ENCODE measurements at regions of chr14 and their contacts with region 1.

Region 1: DNA sequence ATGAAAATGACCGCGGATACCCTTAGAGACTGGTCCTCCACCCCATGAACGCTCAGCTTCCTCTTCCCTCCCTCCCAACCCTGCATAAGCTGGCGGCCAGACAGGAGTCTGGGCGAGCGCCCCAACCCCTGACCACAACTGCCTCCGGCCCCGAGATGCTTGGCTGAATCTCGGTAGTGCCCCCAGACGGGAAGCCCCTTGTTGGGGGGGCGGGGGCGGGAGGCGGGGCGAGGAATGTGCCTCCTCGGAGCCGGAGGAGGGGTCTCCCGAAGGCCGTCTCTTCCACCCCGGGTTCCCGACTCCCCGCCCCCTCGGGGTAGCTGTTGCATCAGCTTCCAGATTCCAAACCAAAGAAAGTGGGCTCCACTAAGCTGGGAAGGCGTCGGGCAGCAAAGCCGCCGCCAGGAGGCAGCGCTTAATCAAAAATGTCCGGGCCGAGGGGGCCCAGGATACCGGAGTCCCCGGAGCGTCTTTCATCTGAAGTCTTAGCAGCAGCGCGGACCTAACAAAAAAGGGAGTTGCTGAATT is 7.1 kb upstream of the MRPL52 start:
- DNase-seq: peak; percentile 86
- ATAC-seq: peak; percentile 86

Region 2: GRCh38 chr14:22407033-22407432 is 415.6 kb before region 1 on chr14:
- intact Hi-C with region 1: no loop called
- DNase-seq: no peak
- ATAC-seq: no peak

Region 3: DNA sequence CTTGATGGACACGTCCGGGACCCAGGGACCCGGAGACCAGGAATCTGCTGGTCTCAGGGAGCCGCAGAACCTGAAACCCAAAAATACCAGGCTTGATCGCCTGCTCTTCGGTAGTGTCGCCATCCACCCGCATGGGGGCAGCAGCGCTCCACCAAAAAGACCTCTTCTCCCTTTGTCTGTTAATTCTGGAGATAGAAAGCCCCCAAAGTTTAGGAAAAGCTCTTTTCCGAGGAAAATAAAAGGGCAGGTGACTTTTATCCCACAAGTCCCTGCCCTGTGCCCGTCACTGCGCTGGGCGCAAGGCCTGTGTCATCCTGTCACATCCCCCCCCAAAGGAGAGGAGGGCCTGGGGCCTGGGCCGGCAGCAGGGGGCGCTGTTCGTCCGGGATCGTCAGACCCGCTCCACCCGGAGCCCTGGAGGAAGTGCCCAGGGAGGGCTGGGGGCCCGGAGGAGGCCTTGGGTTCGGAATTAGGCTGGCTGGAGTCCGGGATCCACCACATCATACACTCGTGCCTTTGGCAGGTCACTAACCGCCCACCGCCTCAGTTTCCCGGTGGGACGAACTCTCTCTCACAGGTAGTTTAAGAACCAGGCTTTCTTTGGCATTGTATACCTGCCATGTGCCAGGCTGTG is 265.5 kb before region 1 on chr14:
- intact Hi-C with region 1: loop called (anchors 5 kb)
- DNase-seq: peak; percentile 84
- ATAC-seq: peak; percentile 88

Region 4: DNA sequence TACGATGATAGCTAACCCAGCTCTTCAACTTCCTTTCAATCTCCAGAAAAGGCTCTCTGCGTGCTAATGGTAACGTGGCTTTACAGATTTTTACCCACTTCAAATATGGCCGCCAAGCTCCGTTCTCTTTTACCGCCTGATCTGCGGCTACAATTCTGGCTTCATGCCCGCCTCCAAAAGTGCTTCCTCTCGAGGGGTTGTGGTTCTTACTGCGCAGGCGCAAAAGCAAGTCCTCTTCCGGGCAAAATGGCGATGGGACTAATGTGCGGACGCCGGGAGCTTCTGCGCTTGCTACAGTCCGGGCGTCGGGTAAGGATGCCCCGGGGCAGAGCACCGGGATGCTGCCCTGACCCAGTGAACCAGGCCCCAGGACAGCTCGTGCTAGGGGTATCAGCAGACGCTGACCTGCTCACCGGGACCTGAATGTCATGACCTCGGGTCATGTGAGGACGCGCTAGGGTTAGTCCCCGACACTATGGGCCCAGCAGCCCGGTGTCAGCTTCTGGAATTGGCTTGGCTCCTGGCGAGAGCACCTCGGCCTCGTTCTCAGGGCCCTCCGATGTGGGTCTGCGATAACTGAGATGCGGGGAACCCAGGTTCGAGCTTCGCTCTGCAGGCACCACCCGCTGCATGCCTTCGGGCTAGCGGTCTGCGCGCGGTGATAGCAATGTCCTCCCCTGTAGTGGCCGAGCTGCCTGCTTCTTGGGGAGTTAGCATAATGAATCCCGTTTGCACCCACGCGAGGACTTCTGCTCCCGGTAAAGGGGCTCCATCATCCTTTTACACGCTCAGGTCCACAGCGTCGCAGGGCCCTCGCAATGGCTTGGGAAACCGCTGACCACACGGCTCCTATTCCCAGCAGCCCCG is 55.9 kb before region 1 on chr14 and contains the start of gene OXA1L:
- intact Hi-C with region 1: loop called (anchors 5 kb)
- DNase-seq: peak; percentile 97
- ATAC-seq: peak; percentile 95
- total RNA-seq, gene OXA1L: 170 TPM

Region 5: DNA sequence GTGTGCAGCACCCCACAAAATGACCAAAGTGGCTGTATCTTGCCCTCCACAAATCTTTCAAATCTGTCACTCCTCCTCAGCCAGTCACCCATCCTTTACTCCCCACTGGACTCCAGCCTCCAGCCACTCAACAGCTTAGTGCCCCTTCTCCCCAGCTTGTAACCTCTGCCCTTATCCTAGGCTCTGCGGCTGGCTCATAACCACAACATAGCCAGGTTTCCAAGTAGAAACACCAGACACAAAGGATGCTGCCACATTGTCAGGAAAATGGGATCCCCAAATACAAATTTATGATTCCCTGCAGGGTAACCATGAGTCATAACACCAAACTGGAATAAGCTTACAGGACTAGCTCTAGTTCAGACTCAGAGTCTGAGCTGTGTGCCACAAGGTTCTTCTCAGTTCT is 41.0 kb before region 1 on chr14:
- intact Hi-C with region 1: no loop called
- DNase-seq: no peak
- ATAC-seq: no peak

Region 6: GRCh38 chr14:22836301-22837113 is 13.9 kb after region 1 on chr14 and contains the start of gene MMP14:
- intact Hi-C with region 1: loop called (anchors 1 kb)
- DNase-seq: peak; percentile 85
- ATAC-seq: peak; percentile 79
- total RNA-seq, gene MMP14: 26.0 TPM